GM12878 (cell line): ENCODE measurements at regions of chr6 and their contacts with region 1.

Region 1: GRCh38 chr6:116287689-116288282 is 8.1 kb upstream of the TSPYL1 start:
- DNase-seq: no peak
- ATAC-seq: peak; percentile 84
- H3K4me3 ChIP-seq: no peak overlapping the region
- H3K27ac ChIP-seq: no peak overlapping the region
- H3K4me1 ChIP-seq: peaks cover 3% of the 10 kb centered on the region; the same call in 1 of the 2 replicates
- H3K27me3 ChIP-seq: no peaks in the 10 kb centered on the region
- CTCF ChIP-seq: peak; percentile 80 to 85 (median 81); a peak in 5 of 6 replicates
- EP300 ChIP-seq: no peak
- POLR2A ChIP-seq: no peak
- RAD21 ChIP-seq: peak; percentile 96

Region 2: DNA sequence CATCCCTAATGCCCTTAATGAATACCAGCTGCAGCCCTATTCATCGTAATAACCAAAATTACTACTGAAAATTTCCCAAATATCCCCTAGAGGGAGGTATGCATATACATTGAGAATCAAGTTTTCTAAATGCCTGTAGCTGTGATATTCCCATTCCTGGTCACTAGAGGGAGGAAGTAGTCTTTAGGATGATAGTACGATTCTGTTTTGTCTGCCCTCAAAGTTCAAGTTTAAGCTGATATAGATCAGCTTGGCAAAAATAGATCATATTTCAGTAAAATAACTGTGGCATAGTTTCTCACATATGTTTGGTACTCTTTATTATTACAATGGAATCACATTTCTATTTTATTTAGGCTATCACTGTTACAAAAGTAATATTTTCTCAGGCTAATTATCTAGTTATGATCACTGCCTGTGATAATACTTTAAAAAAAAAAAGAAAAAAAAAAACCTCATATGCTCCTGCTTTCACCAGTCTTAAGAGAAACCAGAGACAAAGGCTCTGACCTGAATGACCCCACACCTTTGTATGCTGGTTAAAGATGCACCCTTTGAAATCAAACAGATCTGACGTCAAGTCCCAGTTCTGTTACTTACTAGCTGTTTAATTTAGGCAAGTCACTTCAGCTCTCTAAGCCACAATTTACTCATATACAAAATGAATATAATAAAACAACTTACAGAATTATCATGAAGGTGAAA is 19.0 kb before region 1 on chr6:
- CTCF ChIA-PET with region 1: interaction called, 44 read pairs
- POLR2A ChIA-PET with region 1: interaction called, 3 read pairs
- RAD21 ChIA-PET with region 1: interaction called, 25 read pairs
- SMC1A ChIA-PET with region 1: interaction called, 21 read pairs
- in situ Hi-C with region 1: no loop called
- intact Hi-C with region 1: no loop called
- DNase-seq: no peak
- ATAC-seq: peak; percentile 86
- H3K4me3 ChIP-seq: no peak overlapping the region
- H3K27ac ChIP-seq: no peak overlapping the region
- H3K4me1 ChIP-seq: no peaks in the 10 kb centered on the region
- H3K27me3 ChIP-seq: no peaks in the 10 kb centered on the region
- CTCF ChIP-seq: peak; percentile 70 to 97 (median 74); a peak in 5 of 6 replicates
- EP300 ChIP-seq: no peak
- POLR2A ChIP-seq: no peak
- RAD21 ChIP-seq: peak; percentile 83

Region 3: GRCh38 chr6:116316772-116317467 is 29.1 kb after region 1 on chr6:
- CTCF ChIA-PET with region 1: interaction called, 13 read pairs
- POLR2A ChIA-PET with region 1: no interaction called
- RAD21 ChIA-PET with region 1: interaction called, 6 read pairs
- SMC1A ChIA-PET with region 1: interaction called, 5 read pairs
- in situ Hi-C with region 1: no loop called
- intact Hi-C with region 1: no loop called
- DNase-seq: no peak
- ATAC-seq: no peak
- H3K4me3 ChIP-seq: no peak overlapping the region
- H3K27ac ChIP-seq: no peak overlapping the region
- H3K4me1 ChIP-seq: peaks cover 3% of the 10 kb centered on the region; the same call in 1 of the 2 replicates
- H3K27me3 ChIP-seq: no peaks in the 10 kb centered on the region; a peak in 1 of 4 replicates
- CTCF ChIP-seq: 0 out of 6 replicates have a peak, but pooled peaks of 1 of the 3 experiments have one; percentile 6
- EP300 ChIP-seq: no peak
- POLR2A ChIP-seq: no peak
- RAD21 ChIP-seq: no peak

Region 4: GRCh38 chr6:116371120-116371917 is 83.5 kb after region 1 on chr6:
- CTCF ChIA-PET with region 1: interaction called, 6 read pairs
- POLR2A ChIA-PET with region 1: no interaction called
- RAD21 ChIA-PET with region 1: interaction called, 8 read pairs
- SMC1A ChIA-PET with region 1: interaction called, 10 read pairs
- in situ Hi-C with region 1: no loop called
- intact Hi-C with region 1: loop called (anchors 5 kb)
- DNase-seq: no peak
- ATAC-seq: peak; percentile 73
- H3K4me3 ChIP-seq: peak overlapping the region; percentile 92
- H3K27ac ChIP-seq: peak overlapping the region; percentile 92
- H3K4me1 ChIP-seq: peaks cover 23% of the 10 kb centered on the region
- H3K27me3 ChIP-seq: no peaks in the 10 kb centered on the region
- CTCF ChIP-seq: no peak
- EP300 ChIP-seq: 0 out of 4 replicates have a peak, but pooled peaks of 1 of the 2 experiments have one; percentile 34
- POLR2A ChIP-seq: peak; percentile 37; the same call in 1 of the 2 replicates
- RAD21 ChIP-seq: no peak

Region 5: DNA sequence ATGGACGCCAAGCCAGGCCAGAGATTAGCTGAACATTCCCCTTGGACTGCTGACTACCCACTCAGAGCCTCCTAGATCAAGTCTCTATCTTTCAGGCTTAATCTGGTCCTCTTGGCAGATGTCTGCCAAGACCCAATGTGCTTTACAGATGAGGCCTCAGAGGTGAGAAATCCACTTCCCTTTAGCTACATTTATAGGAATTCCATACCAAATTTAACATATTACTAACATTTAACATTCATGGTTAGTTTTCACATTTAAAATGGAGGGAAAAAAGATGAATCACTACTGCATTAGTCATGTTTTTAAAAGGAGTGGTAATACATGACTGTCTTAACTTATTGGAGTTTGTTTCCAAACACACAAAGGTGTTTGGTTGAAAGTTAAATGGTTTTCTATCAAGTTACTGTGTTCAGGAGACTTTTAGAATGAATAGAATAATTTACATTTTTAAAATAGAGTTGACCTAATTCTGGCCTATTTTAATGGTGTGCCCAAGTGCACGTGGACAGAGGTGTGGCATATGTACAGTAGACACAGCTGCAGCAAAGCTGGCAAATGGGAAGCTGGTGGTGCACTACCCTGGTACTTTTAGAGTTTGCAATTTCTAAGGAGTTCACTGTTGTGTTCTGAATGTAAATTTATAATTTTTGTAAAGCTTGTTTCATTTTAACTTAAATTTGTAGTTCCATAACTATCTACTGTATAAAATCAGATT is 131.4 kb after region 1 on chr6:
- CTCF ChIA-PET with region 1: interaction called, 12 read pairs
- POLR2A ChIA-PET with region 1: no interaction called
- RAD21 ChIA-PET with region 1: no interaction called
- SMC1A ChIA-PET with region 1: interaction called, 8 read pairs
- in situ Hi-C with region 1: no loop called
- intact Hi-C with region 1: no loop called
- DNase-seq: no peak
- ATAC-seq: no peak
- H3K4me3 ChIP-seq: no peak overlapping the region
- H3K27ac ChIP-seq: no peak overlapping the region; the same call in 1 of the 2 replicates
- H3K4me1 ChIP-seq: no peaks in the 10 kb centered on the region; the same call in 1 of the 2 replicates
- H3K27me3 ChIP-seq: no peaks in the 10 kb centered on the region
- CTCF ChIP-seq: no peak
- EP300 ChIP-seq: no peak
- POLR2A ChIP-seq: no peak
- RAD21 ChIP-seq: no peak

Region 6: GRCh38 chr6:116450769-116451740 is 163.3 kb after region 1 on chr6:
- CTCF ChIA-PET with region 1: interaction called, 25 read pairs
- POLR2A ChIA-PET with region 1: no interaction called
- RAD21 ChIA-PET with region 1: interaction called, 54 read pairs
- SMC1A ChIA-PET with region 1: interaction called, 21 read pairs
- in situ Hi-C with region 1: no loop called
- intact Hi-C with region 1: no loop called
- DNase-seq: peak; percentile 52
- ATAC-seq: peak; percentile 93
- H3K4me3 ChIP-seq: no peak overlapping the region
- H3K27ac ChIP-seq: peak overlapping the region; percentile 22; the same call in 1 of the 2 replicates
- H3K4me1 ChIP-seq: peaks cover 10% of the 10 kb centered on the region
- H3K27me3 ChIP-seq: no peaks in the 10 kb centered on the region
- CTCF ChIP-seq: no peak
- EP300 ChIP-seq: no peak
- POLR2A ChIP-seq: no peak
- RAD21 ChIP-seq: no peak

Region 7: DNA sequence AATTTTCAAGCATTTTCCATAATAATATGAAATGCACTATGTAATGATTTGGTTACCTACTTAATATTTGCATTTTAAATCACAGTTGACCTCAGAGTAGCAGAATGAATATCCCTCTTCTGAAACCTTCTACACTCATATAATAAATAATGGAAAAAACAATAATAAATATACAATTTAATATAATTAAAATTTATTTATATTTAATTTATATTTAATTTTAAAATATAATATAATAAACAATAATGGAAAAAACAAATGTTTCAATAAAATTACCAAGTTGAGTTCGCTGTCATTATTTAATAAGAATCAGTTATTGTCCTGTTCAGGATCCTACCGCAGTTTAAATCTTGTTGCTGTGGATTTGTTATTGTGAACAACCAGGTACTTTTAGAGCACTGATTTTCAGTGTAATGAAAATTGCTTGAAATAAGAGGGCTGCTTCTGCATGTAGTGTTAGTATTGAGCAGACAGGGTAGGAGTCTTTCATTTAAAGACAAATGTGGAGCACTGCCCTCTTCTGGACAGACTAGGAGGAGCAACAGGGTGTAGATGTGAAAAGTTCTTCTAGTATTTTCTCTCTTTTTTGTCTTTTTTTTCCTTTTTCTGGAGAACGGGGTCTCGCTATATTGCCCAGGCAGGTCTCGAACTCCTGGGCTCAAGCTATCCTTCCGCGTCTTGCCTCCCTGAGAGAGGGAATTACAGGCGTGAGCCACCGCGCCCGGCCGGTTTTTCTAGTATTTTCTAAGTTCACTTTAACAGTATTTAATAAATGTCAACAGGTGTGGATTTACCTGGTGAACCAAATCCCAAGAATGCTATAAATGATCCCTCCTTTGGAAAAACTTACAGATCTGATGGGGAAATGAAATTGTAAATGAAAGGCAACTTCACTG is 244.1 kb after region 1 on chr6:
- CTCF ChIA-PET with region 1: interaction called, 96 read pairs
- POLR2A ChIA-PET with region 1: no interaction called
- RAD21 ChIA-PET with region 1: interaction called, 35 read pairs
- SMC1A ChIA-PET with region 1: interaction called, 42 read pairs
- in situ Hi-C with region 1: no loop called
- intact Hi-C with region 1: loop called (anchors 1 kb)
- DNase-seq: no peak
- ATAC-seq: peak; percentile 89
- H3K4me3 ChIP-seq: no peak overlapping the region
- H3K27ac ChIP-seq: no peak overlapping the region
- H3K4me1 ChIP-seq: no peaks in the 10 kb centered on the region
- H3K27me3 ChIP-seq: peaks cover 2 to 3% of the 10 kb centered on the region in 2 experiments; a peak in 2 of 4 replicates
- CTCF ChIP-seq: peak; percentile 69 to 71 (median 69)
- EP300 ChIP-seq: no peak
- POLR2A ChIP-seq: no peak
- RAD21 ChIP-seq: peak; percentile 81